Heart left ventricle (tissue), 16 donors: ENCODE measurements at regions of chr12 and their contacts with region 1.

Region 1: DNA sequence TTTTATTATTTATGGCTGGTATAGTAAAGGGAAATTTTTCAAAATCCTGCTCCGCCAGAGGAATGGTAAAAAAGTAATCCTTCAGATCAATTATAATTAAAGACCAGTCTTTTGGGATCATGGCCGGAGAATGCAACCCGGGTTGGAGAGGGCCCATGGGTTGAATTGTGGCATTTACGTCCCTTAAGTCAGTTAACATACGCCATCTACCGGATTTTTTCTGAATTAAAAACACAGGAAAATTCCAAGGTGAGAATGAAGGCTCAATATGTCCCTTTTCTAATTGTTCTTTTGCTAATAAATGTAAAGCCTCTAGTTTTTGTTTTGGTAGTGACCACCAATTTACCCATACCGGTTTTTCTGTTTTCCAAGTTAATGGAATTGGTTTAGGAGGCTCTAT is 602.8 kb downstream of the ALG10 start:
- DNase-seq: no peak
- ATAC-seq: no peak
- H3K4me3 ChIP-seq: no peak overlapping the region
- H3K27ac ChIP-seq: no peak overlapping the region
- H3K4me1 ChIP-seq: no peaks in the 10 kb centered on the region
- H3K27me3 ChIP-seq: no peaks in the 10 kb centered on the region
- CTCF ChIP-seq: peak in 9 of 12 donors; percentile 11 to 53 (median 37)
- POLR2A ChIP-seq: no peak

Region 2: GRCh38 chr12:34033628-34034282 is 591.4 kb before region 1 on chr12:
- intact Hi-C with region 1: loop called in 4 of 10 experiments (anchors 5 to 10 kb)
- DNase-seq: no peak
- ATAC-seq: no peak
- H3K4me3 ChIP-seq: no peak overlapping the region
- H3K27ac ChIP-seq: no peak overlapping the region
- H3K4me1 ChIP-seq: no peaks in the 10 kb centered on the region
- H3K27me3 ChIP-seq: no peaks in the 10 kb centered on the region
- CTCF ChIP-seq: peak; percentile 21 to 71 (median 56)
- POLR2A ChIP-seq: no peak

Region 3: DNA sequence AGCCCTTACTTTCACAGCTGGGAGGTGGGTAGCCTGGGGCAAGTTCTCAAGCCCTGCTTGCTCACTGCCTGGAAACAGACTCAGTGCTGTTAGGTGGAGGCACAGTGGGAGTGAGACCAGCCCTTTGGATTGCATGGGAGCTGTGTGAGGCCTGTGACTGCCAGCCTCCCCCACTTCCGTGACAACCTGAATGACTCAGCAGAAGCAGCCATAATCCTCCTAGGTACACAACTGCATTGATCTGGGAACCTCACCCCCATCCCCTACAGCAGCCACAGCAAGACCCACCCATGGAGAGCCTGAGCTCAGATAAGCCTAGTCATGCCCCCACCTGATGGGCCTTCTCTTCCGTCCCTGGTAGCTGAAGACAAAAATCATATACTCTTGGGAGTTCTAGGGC is 576.4 kb before region 1 on chr12:
- intact Hi-C with region 1: loop called in 1 of 10 experiments (anchors 5 kb)
- DNase-seq: no peak
- ATAC-seq: no peak
- H3K4me3 ChIP-seq: no peak overlapping the region
- H3K27ac ChIP-seq: no peak overlapping the region
- H3K4me1 ChIP-seq: no peaks in the 10 kb centered on the region
- H3K27me3 ChIP-seq: no peaks in the 10 kb centered on the region
- CTCF ChIP-seq: no peak
- POLR2A ChIP-seq: no peak

Region 4: DNA sequence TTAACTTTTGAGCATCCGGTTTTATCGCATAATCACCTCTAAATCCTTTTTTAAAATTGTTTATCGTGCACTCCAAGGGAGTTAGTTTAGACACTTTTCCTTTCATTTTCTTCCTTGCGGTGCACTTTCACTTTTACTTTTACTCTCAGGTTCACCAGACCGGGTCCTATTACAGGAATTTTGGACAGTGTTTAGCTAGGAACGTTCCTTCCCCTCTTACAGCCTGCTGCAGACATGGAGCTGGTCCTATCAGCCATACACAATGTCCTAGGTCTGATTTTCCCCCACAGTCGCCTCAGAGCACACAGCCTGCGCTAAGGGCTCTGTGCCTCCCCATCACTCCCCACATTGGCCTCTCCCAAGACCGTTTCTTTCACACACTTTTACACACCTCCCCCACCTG is 498.9 kb before region 1 on chr12:
- intact Hi-C with region 1: loop called (anchors 2 to 10 kb)
- DNase-seq: no peak
- ATAC-seq: peak in 1 of 4 donors; percentile 61
- H3K4me3 ChIP-seq: peak overlapping the region in 10 of 12 donors; percentile 15 to 47 (median 34)
- H3K27ac ChIP-seq: peak overlapping the region in 8 of 12 donors; percentile 0 to 70 (median 51)
- H3K4me1 ChIP-seq: peaks cover 0 to 15% (median 2%) of the 10 kb centered on the region in 12 donors
- H3K27me3 ChIP-seq: peaks cover 0 to 6% (median 0%) of the 10 kb centered on the region in 9 donors
- CTCF ChIP-seq: no peak
- POLR2A ChIP-seq: no peak

Region 5: DNA sequence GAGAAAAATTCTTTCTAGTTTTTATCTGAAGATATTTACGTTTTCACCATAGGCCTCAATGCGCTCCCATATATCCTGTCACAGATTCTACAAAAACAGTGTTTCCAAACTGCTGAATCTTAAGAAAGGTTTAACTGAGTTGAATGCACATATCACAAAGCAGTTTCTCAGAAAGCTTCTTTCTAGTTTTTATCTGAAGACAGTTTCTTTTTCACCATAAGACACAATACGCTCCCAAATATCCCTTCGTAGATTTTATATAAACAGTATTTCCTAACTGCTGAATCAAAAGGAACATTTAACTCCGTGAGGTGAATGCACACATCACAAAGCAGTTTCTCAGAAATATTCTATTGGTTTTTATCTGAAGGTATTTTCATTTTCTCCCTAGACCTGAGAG is 217.3 kb before region 1 on chr12:
- intact Hi-C with region 1: no loop called
- DNase-seq: no peak
- ATAC-seq: no peak
- H3K4me3 ChIP-seq: no peak overlapping the region
- H3K27ac ChIP-seq: no peak overlapping the region
- H3K4me1 ChIP-seq: no peaks in the 10 kb centered on the region
- H3K27me3 ChIP-seq: no peaks in the 10 kb centered on the region
- CTCF ChIP-seq: no peak
- POLR2A ChIP-seq: no peak